ENCODE measurements at regions of chr12 and their contacts with region 1.

Region 1: GRCh38 chr12:6688999-6689882 is at the start of gene ZNF384:
- DNase-seq: peak; percentile 83 to 98 (median 96)
- ATAC-seq: peak; percentile 91
- H3K4me3 ChIP-seq: peak within 1 kb of the TSS; percentile 84
- H3K4me3 Mint-ChIP-seq: peak within 1 kb of the TSS; percentile 85 to 100 (median 96)
- H3K27ac ChIP-seq: peak within 1 kb of the TSS; percentile 91
- H3K27ac Mint-ChIP-seq: peak within 1 kb of the TSS; percentile 93 to 99 (median 98)
- H3K4me1 ChIP-seq: peaks cover 17 to 19% of the 10 kb centered on the region in 2 donors
- H3K4me1 Mint-ChIP-seq: peaks cover 37 to 69% (median 53%) of the 10 kb centered on the region in 7 donors
- H3K27me3 ChIP-seq: no peaks in the 10 kb centered on the region
- H3K27me3 Mint-ChIP-seq: no peaks in the 10 kb centered on the region
- total RNA-seq, gene ZNF384: 62.8 to 98.2 (median 85.4) TPM

Region 2: DNA sequence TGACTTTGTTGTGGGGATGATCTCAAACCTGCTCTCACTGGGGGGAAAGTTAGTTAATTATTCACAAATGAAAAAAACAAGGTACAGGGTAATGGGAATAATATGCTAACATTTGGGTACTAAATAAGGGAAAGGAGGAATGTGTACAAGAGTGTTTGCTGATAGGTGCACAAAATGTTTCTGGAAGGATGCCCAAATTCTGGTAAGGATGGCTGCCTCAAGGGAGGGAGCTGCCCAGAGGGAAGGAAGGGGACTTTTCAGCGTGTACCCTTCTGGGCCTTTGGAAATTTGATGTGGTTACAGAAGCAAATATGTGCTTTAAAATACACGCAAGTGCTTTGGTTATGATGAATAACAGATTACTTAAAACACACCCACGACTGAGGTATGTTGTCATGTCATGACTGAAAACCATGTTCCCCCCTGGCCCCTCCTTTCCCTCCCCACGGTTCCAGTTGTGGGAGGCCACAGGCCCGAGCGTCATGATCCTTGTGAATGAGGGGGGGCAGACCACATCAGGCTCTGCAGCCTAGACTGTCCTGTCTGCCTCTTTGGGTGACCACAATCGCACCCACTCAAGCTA is 422.0 kb before region 1 on chr12:
- CTCF ChIA-PET with region 1: no interaction called
- POLR2A ChIA-PET with region 1: no interaction called
- intact Hi-C with region 1: no loop called
- DNase-seq: peak in 1 of 9 donors; percentile 74
- ATAC-seq: peak; percentile 20
- H3K4me3 ChIP-seq: no peak overlapping the region
- H3K4me3 Mint-ChIP-seq: no peak overlapping the region
- H3K27ac ChIP-seq: no peak overlapping the region
- H3K27ac Mint-ChIP-seq: peak overlapping the region in 1 of 9 donors; percentile 9
- H3K4me1 ChIP-seq: no peaks in the 10 kb centered on the region
- H3K4me1 Mint-ChIP-seq: peaks cover 0 to 8% (median 4%) of the 10 kb centered on the region in 7 donors
- H3K27me3 ChIP-seq: no peaks in the 10 kb centered on the region
- H3K27me3 Mint-ChIP-seq: no peaks in the 10 kb centered on the region

Region 3: DNA sequence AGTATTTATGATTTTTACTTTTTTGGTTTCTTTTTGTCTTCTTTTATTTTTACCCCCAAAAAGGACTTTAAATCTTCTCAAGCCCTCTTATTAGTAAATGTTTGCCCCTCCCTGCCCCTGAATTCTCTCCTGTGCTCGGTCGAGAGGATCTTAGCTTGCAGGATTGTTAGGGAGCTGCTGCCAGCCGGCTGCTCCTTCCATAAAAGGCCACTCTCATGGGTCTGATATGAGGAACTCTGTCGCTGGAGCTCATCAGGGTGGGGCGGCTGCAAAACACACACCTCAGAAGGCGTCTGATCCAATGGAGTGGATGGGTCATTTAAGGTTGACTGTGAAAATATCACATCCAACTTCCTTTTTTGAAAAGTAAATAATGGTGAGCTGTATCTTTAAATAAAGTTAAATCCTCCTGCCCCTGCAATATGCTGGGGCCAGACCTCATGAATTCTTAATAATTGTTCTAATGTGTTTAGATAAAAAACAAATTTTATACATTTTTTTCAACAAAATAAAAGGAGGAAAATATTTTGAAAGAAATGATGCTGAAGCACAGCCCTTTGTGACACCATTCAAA is 296.6 kb before region 1 on chr12:
- CTCF ChIA-PET with region 1: no interaction called
- POLR2A ChIA-PET with region 1: no interaction called
- intact Hi-C with region 1: no loop called
- DNase-seq: no peak
- ATAC-seq: no peak
- H3K4me3 ChIP-seq: no peak overlapping the region
- H3K4me3 Mint-ChIP-seq: no peak overlapping the region
- H3K27ac ChIP-seq: no peak overlapping the region
- H3K27ac Mint-ChIP-seq: peak overlapping the region in 1 of 9 donors; percentile 60
- H3K4me1 ChIP-seq: no peaks in the 10 kb centered on the region
- H3K4me1 Mint-ChIP-seq: peaks cover 0 to 4% (median 0%) of the 10 kb centered on the region in 7 donors
- H3K27me3 ChIP-seq: no peaks in the 10 kb centered on the region
- H3K27me3 Mint-ChIP-seq: peaks cover 0 to 16% (median 0%) of the 10 kb centered on the region in 5 donors

Region 4: DNA sequence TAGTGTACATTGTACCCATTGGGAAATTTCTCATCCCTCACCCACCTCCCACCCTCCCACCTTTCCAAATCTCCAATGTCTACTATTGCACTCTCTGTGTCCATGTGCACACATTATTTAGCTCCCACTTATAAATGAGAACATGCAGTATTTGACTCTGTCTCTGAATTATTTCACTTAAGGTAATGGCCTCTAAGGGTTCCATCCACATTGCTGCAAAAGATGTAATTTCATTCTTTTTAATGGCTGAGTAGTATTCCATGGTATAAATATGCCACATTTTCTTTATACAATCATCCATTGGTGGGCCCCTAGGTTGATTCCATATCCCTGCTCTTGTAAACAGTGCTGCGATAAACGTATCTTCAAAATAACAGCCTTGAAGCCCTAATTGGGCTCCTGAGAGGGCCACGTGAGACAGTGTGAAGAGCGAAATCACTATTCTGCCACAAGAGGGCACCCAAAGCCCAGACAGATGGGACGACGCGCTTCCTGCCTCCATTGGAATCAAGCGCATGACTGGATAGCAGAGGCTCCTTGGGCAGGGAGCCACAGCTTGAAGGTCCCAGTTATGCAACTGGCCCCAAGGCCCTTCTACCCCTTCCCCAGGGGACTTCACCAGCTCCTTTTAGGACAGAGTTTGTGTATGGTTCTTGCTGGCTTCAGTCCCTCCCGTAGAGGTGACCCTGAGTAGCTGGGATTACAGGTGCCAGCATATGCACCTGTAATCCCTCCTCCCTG is 265.8 kb before region 1 on chr12:
- CTCF ChIA-PET with region 1: no interaction called
- POLR2A ChIA-PET with region 1: no interaction called
- intact Hi-C with region 1: loop called in 1 of 2 experiments (anchors 10 kb)
- DNase-seq: peak; percentile 47 to 88 (median 80)
- ATAC-seq: peak; percentile 90
- H3K4me3 ChIP-seq: no peak overlapping the region
- H3K4me3 Mint-ChIP-seq: peak overlapping the region in 7 of 10 donors; percentile 10 to 69 (median 27)
- H3K27ac ChIP-seq: peak overlapping the region; percentile 56
- H3K27ac Mint-ChIP-seq: peak overlapping the region; percentile 66 to 97 (median 86)
- H3K4me1 ChIP-seq: peaks cover 30 to 31% of the 10 kb centered on the region in 2 donors
- H3K4me1 Mint-ChIP-seq: peaks cover 18 to 46% (median 38%) of the 10 kb centered on the region in 7 donors
- H3K27me3 ChIP-seq: no peaks in the 10 kb centered on the region
- H3K27me3 Mint-ChIP-seq: no peaks in the 10 kb centered on the region

Region 5: GRCh38 chr12:6563448-6564050 is 125.7 kb before region 1 on chr12:
- CTCF ChIA-PET with region 1: interaction called, 5 read pairs
- POLR2A ChIA-PET with region 1: interaction called, 4 read pairs
- intact Hi-C with region 1: loop called (anchors 1 kb)
- DNase-seq: peak; percentile 36 to 68 (median 52)
- ATAC-seq: peak; percentile 43
- H3K4me3 ChIP-seq: no peak overlapping the region
- H3K4me3 Mint-ChIP-seq: peak overlapping the region in 2 of 10 donors; percentile 6 to 55
- H3K27ac ChIP-seq: no peak overlapping the region
- H3K27ac Mint-ChIP-seq: peak overlapping the region in 7 of 9 donors; percentile 9 to 86 (median 78)
- H3K4me1 ChIP-seq: peaks cover 8 to 14% of the 10 kb centered on the region in 2 donors
- H3K4me1 Mint-ChIP-seq: peaks cover 22 to 54% (median 41%) of the 10 kb centered on the region in 7 donors
- H3K27me3 ChIP-seq: no peaks in the 10 kb centered on the region
- H3K27me3 Mint-ChIP-seq: no peaks in the 10 kb centered on the region

Region 6: DNA sequence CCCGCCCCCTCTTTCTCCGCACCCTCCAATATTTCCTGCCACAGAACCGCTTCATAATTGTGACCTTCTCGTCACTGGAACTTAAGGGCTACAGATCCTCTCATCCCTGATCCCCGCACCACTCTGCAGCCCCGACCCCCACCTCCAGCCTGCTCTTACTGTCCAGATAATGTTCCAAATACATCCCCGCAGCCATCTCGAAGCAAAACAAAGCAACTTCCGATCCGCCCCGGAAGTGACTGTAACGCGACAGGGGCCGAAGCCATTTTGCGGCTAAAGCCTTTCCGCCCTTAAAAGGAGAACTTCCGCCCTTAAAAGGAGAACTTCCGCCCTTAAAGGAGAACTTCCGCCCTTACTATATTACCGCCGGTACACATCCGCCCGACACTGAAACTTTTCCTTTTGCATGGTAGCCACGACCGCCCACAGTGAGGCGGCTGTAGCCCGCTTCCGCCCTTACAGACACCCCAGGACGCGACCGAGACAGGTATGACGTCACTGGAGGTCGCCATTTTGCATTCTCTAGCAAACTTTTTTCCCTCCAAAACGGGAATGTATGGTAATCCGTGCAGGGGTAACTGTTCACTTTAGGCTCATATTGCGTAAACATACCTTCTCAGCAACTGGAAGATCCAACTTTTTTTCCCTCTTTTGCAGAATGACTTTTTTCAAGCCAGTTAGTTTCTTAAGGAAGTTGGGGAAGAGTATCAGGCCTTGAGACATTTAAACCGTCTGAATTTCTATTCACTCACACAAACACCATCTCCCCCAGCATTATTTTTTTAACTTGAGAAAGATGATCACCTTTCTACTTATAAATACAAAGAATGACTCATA is 26.1 kb before region 1 on chr12 and contains the start of gene ING4:
- CTCF ChIA-PET with region 1: interaction called, 9 read pairs
- POLR2A ChIA-PET with region 1: interaction called, 47 read pairs
- intact Hi-C with region 1: loop called (anchors 1 kb)
- DNase-seq: peak; percentile 79 to 99 (median 98)
- ATAC-seq: peak; percentile 99
- H3K4me3 ChIP-seq: peak within 1 kb of the TSS; percentile 92
- H3K4me3 Mint-ChIP-seq: peak within 1 kb of the TSS; percentile 92 to 99 (median 96)
- H3K27ac ChIP-seq: peak within 1 kb of the TSS; percentile 80
- H3K27ac Mint-ChIP-seq: peak within 1 kb of the TSS; percentile 91 to 99 (median 96)
- H3K4me1 ChIP-seq: peaks cover 15 to 16% of the 10 kb centered on the region in 2 donors
- H3K4me1 Mint-ChIP-seq: peaks cover 18 to 47% (median 36%) of the 10 kb centered on the region in 7 donors
- H3K27me3 ChIP-seq: no peaks in the 10 kb centered on the region
- H3K27me3 Mint-ChIP-seq: peaks cover 0 to 2% (median 0%) of the 10 kb centered on the region in 5 donors
- total RNA-seq, gene ING4: 33.1 to 101 (median 39.6) TPM

Region 7: GRCh38 chr12:6825398-6826124 is 136.3 kb after region 1 on chr12:
- CTCF ChIA-PET with region 1: no interaction called
- POLR2A ChIA-PET with region 1: interaction called, 6 read pairs
- intact Hi-C with region 1: loop called (anchors 1 to 5 kb)
- DNase-seq: peak; percentile 69 to 89 (median 78)
- ATAC-seq: peak; percentile 79
- H3K4me3 ChIP-seq: no peak overlapping the region
- H3K4me3 Mint-ChIP-seq: peak overlapping the region in 7 of 10 donors; percentile 5 to 65 (median 35)
- H3K27ac ChIP-seq: no peak overlapping the region
- H3K27ac Mint-ChIP-seq: peak overlapping the region in 4 of 9 donors; percentile 22 to 84 (median 53)
- H3K4me1 ChIP-seq: peaks cover 4 to 13% of the 10 kb centered on the region in 2 donors
- H3K4me1 Mint-ChIP-seq: peaks cover 27 to 42% (median 39%) of the 10 kb centered on the region in 7 donors
- H3K27me3 ChIP-seq: peaks cover 0 to 12% of the 10 kb centered on the region in 2 donors
- H3K27me3 Mint-ChIP-seq: peaks cover 9 to 63% (median 26%) of the 10 kb centered on the region in 5 donors

Region 8: GRCh38 chr12:6937481-6938297 is 248.4 kb after region 1 on chr12:
- CTCF ChIA-PET with region 1: no interaction called
- POLR2A ChIA-PET with region 1: interaction called, 7 read pairs
- intact Hi-C with region 1: loop called in 1 of 2 experiments (anchors 1 kb)
- DNase-seq: peak; percentile 81 to 96 (median 93)
- ATAC-seq: peak; percentile 97
- H3K4me3 ChIP-seq: peak overlapping the region; percentile 90
- H3K4me3 Mint-ChIP-seq: peak overlapping the region; percentile 75 to 88 (median 84)
- H3K27ac ChIP-seq: peak overlapping the region; percentile 92
- H3K27ac Mint-ChIP-seq: peak overlapping the region; percentile 91 to 99 (median 96)
- H3K4me1 ChIP-seq: peaks cover 5 to 29% of the 10 kb centered on the region in 2 donors
- H3K4me1 Mint-ChIP-seq: peaks cover 41 to 67% (median 51%) of the 10 kb centered on the region in 7 donors
- H3K27me3 ChIP-seq: no peaks in the 10 kb centered on the region
- H3K27me3 Mint-ChIP-seq: no peaks in the 10 kb centered on the region